ENCODE measurements at regions of chr10 and their contacts with region 1.

Region 1: DNA sequence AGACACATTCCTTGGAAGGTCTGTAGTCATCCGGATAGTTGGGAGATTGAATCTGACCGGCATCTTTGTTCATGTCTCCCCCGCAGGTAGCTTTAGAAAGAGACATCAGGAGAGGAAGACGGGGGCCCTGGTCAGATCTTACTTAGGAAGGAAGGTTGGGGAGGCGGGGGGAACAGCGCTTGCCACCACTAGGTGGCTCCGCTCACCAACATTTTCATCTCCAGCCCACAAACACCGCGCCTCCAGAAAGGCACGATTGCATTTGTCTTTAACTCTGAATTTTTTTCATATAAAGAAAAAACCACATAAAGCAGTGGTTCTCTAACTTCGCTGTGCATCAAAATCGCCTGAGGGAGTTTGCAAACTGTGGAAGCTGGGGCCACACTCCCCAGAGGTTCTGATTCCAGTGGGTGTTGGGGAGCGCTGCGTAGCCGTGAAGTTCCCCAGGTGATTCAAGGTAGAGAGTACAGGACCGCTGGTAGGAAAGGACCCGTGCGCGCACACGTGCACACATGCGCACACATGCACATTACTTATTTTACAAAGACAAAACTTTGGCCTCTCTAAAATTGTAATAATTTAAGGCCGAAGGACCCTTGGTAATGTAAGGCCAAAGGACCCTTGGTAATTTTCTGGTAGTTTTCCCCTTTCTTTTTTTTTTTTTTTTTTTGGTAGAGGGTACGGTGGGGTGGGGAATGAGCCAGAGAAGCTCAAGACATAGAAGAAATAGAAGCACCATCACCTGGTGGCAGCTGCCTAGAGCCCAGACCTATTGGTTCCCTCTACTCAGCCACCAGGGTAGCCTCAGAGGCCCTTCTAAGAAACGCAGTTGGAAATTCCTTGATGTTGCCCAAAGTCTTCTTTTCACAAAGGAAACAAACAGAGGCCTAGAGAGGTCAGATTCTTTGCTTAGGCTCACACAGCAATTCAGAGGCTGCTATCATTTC is 37.4 kb upstream of the OPALIN start:
- H3K4me3 Mint-ChIP-seq: no peak overlapping the region
- H3K27ac Mint-ChIP-seq: no peak overlapping the region
- H3K4me1 Mint-ChIP-seq: peaks cover 1% of the 10 kb centered on the region
- H3K27me3 Mint-ChIP-seq: peaks cover 46% of the 10 kb centered on the region

Region 2: GRCh38 chr10:95814011-95814727 is 582.0 kb before region 1 on chr10:
- intact Hi-C with region 1: no loop called
- H3K4me3 Mint-ChIP-seq: no peak overlapping the region
- H3K27ac Mint-ChIP-seq: peak overlapping the region; percentile 2
- H3K4me1 Mint-ChIP-seq: peaks cover 53% of the 10 kb centered on the region
- H3K27me3 Mint-ChIP-seq: no peaks in the 10 kb centered on the region

Region 3: GRCh38 chr10:96505150-96506136 is 109.2 kb after region 1 on chr10:
- intact Hi-C with region 1: no loop called
- H3K4me3 Mint-ChIP-seq: no peak overlapping the region
- H3K27ac Mint-ChIP-seq: no peak overlapping the region
- H3K4me1 Mint-ChIP-seq: no peaks in the 10 kb centered on the region
- H3K27me3 Mint-ChIP-seq: peaks cover 13% of the 10 kb centered on the region

Region 4: DNA sequence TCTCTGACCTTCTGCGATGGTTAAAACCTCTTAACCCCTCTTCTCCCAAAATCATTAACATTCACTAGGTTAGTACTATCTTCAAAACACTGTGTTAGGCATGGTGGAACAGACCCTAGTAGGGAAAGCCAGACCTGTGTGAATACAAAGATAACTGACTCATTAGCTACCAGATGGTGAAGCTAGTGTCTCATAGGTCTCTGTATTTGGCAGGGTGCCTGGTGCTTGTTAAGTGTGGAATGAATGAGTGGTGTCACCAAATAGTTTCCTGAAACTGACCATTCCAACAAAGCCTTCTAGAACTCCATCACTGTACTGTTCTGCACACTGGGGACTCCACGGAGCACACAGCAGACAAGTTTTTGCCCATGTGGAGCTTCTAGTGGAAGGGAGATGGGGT is 218.3 kb after region 1 on chr10:
- intact Hi-C with region 1: loop called (anchors 10 kb)
- H3K4me3 Mint-ChIP-seq: no peak overlapping the region
- H3K27ac Mint-ChIP-seq: no peak overlapping the region
- H3K4me1 Mint-ChIP-seq: peaks cover 6% of the 10 kb centered on the region
- H3K27me3 Mint-ChIP-seq: no peaks in the 10 kb centered on the region